ENCODE measurements at regions of chr9 and their contacts with region 1.

Region 1: DNA sequence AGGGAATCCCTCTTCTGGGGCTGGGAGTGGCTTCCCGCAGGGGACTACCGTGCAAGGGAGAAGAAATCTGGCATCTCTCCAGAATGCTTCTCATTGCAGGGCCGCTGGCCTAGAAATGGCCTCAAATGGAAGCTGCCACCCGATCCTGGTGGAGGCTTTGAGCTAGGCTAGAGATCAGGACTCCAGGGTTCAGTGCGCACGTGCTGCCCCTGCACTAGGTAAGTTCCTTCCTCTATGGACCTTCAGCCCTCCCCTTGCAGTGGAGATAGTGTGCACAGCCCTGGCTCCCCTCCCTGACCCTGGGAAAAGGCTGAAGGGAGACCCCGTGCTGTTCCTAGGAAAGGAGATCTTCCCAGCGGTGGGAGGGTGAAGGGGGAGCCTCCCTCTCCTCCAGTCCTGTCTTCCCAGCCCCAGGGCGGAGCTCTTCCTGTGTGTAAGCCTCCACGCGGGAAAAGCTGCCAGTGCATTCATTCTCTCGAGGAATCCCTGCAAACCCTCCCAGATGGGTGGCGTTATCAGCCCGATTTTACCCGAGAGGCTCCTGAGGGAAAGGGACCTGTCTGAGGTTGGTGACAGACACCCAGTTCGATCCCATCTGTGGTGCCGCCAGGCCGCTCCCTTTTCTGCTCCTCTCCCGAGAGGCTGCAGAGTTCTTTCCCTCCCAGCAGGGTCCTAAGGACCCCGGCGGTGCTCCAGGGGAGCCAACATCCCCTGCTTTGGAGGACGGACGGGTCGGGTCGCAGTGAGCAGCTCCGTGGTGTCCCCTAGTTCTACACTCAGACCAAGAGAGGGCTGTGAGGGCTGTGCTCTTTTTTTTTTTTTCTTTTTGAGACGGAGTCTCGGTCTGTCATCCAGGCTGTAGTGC is 1.4 kb upstream of the CERCAM start:
- DNase-seq: no peak

Region 2: GRCh38 chr9:127586537-127586936 is 832.8 kb before region 1 on chr9:
- intact Hi-C with region 1: no loop called
- DNase-seq: peak; percentile 86

Region 3: GRCh38 chr9:128296337-128297220 is 122.7 kb before region 1 on chr9:
- intact Hi-C with region 1: loop called (anchors 5 kb)
- DNase-seq: no peak

Region 4: DNA sequence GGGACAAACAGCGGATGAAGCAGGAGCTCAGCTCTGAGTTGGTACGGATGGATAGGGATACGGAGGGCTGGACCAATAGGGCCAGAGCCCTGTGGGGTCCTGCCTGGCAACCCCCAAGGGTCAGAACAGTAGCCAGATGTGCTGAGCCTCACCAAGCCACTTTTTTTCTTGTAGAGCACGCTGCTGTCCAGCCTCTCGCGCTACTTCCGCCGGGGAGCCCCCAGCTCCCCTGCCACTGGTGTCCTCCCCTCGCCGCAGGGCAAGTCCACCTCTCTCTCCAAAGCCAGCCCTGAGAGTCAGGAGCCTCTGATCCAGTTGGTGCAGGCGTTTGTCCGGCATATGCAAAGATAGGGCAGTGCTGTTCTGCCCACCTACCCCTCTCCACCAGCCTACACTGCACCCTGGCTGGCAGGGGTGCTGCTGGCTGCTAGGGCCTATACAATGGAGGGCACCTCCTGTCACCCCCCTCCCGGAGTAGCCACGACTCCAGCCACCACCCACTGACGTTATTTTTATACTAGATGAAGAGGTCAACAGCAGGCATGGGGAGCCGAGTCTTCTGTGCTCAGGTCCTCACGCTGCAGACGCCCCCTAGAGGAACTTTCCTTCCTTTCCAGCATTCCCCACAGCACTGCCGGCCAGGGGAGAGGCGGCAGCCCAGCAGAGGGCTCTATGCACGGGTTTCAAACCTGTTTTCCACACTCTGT is 587.2 kb after region 1 on chr9:
- intact Hi-C with region 1: no loop called
- DNase-seq: no peak